Gastrocnemius medialis (tissue), 4 donors: ENCODE measurements at regions of chr12 and their contacts with region 1.

Region 1: GRCh38 chr12:114508529-114509129 is 102.7 kb upstream of the TBX5 start:
- DNase-seq: peak; percentile 32 to 51
- ATAC-seq: peak in 1 of 2 donors; percentile 60
- H3K4me3 ChIP-seq: no peak overlapping the region
- H3K27ac ChIP-seq: no peak overlapping the region
- H3K4me1 ChIP-seq: no peaks in the 10 kb centered on the region
- H3K27me3 ChIP-seq: peaks cover 0 to 2% (median 0%) of the 10 kb centered on the region in 3 donors
- CTCF ChIP-seq: peak; percentile 38 to 70 (median 57)
- POLR2A ChIP-seq: no peak

Region 2: DNA sequence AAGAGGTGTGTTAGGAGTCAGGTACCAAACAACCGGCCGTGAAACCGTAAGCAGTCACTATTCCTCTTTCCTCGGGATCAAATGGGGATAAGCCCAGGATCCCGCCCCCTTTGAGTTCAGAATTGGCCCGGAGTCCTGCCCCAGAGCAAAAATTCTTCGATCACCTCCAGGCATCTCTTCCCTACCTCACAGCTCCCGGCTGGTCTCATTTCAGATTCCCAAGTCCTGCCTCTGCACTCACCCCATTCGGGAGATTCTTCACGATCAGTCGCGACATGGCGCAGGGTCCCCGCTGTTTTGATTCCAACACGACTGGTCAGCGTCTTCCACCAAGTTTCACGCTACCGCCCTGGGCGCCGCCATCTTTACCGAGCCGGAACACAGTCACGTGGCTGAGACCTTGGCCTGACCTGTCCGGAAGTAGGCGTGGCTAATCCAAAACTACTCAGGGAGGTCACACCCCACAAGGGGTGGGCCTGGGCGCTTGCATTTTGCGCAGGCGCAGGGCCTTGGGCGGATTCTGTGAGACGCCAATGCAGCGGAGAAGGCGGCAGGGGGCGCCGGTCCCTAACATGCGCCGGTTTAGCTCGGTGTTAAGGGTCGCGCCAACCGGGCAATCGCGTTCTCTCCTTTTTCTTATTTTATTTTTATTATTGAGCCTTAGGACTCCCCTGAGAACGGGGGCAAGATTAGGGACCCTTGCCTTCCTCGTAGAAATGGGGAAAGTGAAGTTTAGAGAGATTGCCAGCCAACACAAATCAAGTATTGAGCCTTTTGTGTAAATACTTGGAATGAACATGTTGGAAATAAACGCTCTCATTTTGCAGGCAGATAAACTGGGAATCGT is 542.5 kb before region 1 on chr12 and contains the start of gene RBM19:
- in situ Hi-C with region 1: loop called (anchors 10 kb)
- intact Hi-C with region 1: no loop called
- DNase-seq: peak; percentile 96
- ATAC-seq: peak; percentile 99
- H3K4me3 ChIP-seq: peak within 1 kb of the TSS; percentile 68 to 92 (median 82)
- H3K27ac ChIP-seq: peak within 1 kb of the TSS; percentile 68 to 73 (median 72)
- H3K4me1 ChIP-seq: peaks cover 16% of the 10 kb centered on the region in 2 donors
- H3K27me3 ChIP-seq: no peaks in the 10 kb centered on the region
- CTCF ChIP-seq: peak; percentile 84 to 94 (median 87)
- POLR2A ChIP-seq: peak in 1 of 2 donors; percentile 35
- total RNA-seq, gene RBM19: 21.2 to 28.3 (median 26.8) TPM

Region 3: GRCh38 chr12:113973109-113973904 is 535.3 kb before region 1 on chr12:
- in situ Hi-C with region 1: loop called (anchors 10 kb)
- intact Hi-C with region 1: no loop called
- DNase-seq: no peak
- ATAC-seq: no peak
- H3K4me3 ChIP-seq: no peak overlapping the region
- H3K27ac ChIP-seq: no peak overlapping the region
- H3K4me1 ChIP-seq: no peaks in the 10 kb centered on the region
- H3K27me3 ChIP-seq: peaks cover under 1 to 12% (median 9%) of the 10 kb centered on the region in 3 donors
- CTCF ChIP-seq: no peak
- POLR2A ChIP-seq: no peak

Region 4: GRCh38 chr12:113980537-113981337 is 527.9 kb before region 1 on chr12:
- in situ Hi-C with region 1: loop called in 2 of 4 experiments (anchors 10 kb)
- intact Hi-C with region 1: loop called (anchors 5 kb)
- DNase-seq: no peak
- ATAC-seq: no peak
- H3K4me3 ChIP-seq: no peak overlapping the region
- H3K27ac ChIP-seq: no peak overlapping the region
- H3K4me1 ChIP-seq: no peaks in the 10 kb centered on the region
- H3K27me3 ChIP-seq: peaks cover 4 to 9% (median 4%) of the 10 kb centered on the region in 3 donors
- CTCF ChIP-seq: peak; percentile 41 to 67 (median 56)
- POLR2A ChIP-seq: no peak